ENCODE measurements at regions of chr12 and their contacts with region 1.

Region 1: GRCh38 chr12:105948331-105948730 is 190.4 kb downstream of the NUAK1 start:
- DNase-seq: peak in 1 of 2 donors; percentile 78
- H3K4me3 ChIP-seq: no peak overlapping the region
- H3K27ac ChIP-seq: peak overlapping the region; percentile 79 to 86
- H3K4me1 ChIP-seq: peaks cover 6 to 15% of the 10 kb centered on the region in 2 donors
- H3K27me3 ChIP-seq: no peaks in the 10 kb centered on the region
- CTCF ChIP-seq: no peak

Region 2: DNA sequence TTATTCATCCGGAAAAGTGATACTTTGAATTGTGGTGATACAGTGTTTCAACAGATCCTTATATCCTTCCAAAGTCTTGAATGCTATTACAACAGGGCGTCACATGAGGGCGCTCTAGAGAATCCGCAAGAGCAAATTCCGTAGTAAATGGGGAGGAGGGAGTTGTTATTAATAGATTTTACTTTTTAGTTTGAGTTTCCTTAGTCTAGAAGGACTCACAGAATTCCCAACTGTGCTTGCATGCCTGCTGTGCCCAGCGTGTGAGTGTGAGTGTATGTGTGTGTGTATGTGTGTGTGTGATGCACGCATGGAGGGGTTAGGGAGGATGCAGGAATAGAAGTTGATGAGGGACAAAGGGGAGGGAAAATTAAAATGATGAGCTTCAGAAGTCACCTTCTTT is 242.6 kb before region 1 on chr12:
- intact Hi-C with region 1: loop called (anchors 5 kb)
- DNase-seq: peak in 1 of 2 donors; percentile 82
- H3K4me3 ChIP-seq: no peak overlapping the region
- H3K27ac ChIP-seq: peak overlapping the region; percentile 74 to 83
- H3K4me1 ChIP-seq: peaks cover 0 to 18% of the 10 kb centered on the region in 2 donors
- H3K27me3 ChIP-seq: no peaks in the 10 kb centered on the region
- CTCF ChIP-seq: peak; percentile 57 to 90 (median 84)

Region 3: DNA sequence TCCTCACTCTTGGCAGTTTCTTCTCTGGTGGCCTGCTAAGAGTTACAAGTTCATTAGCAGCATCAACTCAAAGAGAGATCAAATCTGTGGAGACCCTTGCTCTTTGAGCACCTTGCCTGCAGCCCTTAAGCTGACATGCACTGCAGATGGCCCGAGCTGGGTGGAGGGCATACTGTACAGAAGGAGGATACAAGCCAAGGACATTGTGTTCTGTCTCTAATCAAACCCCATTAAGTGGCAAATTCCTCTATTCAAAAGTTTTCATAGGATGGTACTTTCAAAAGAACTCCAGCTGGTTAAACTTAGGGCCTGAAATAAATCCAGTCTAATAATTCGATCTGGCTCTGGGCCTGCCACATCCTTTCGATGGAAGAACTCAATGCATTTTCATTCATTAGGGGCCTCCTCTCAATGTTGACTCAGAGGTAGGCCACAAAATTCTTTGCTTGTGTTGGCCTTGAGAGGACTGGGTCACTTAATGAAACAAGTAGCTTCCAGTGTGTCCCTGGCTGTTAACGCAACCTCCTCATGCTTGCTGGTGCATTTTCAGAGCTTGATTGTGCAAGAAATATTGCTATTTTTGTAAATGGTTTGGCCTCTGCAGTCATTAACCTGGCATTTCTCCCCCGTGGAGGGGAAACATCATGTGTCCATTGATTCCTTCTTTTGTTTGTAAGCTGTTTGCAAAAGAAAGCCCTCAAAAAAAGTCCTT is 127.7 kb before region 1 on chr12:
- intact Hi-C with region 1: loop called (anchors 5 kb)
- DNase-seq: peak; percentile 41 to 87
- H3K4me3 ChIP-seq: no peak overlapping the region
- H3K27ac ChIP-seq: peak overlapping the region; percentile 34 to 71
- H3K4me1 ChIP-seq: peaks cover 5 to 26% of the 10 kb centered on the region in 2 donors
- H3K27me3 ChIP-seq: no peaks in the 10 kb centered on the region
- CTCF ChIP-seq: no peak

Region 4: GRCh38 chr12:107515446-107515958 is 1567.2 kb after region 1 on chr12:
- intact Hi-C with region 1: no loop called
- DNase-seq: peak; percentile 38 to 85
- H3K4me3 ChIP-seq: no peak overlapping the region
- H3K27ac ChIP-seq: no peak overlapping the region
- H3K4me1 ChIP-seq: no peaks in the 10 kb centered on the region
- H3K27me3 ChIP-seq: no peaks in the 10 kb centered on the region
- CTCF ChIP-seq: no peak

Measured in ascending aorta (tissue), 2 donors.